Caco-2 (cell line): ENCODE measurements at regions of chr3 and their contacts with region 1.

Region 1: GRCh38 chr3:179653096-179653797 is 407 bp downstream of the USP13 start:
- DNase-seq: peak; percentile 80 to 82
- H3K4me3 ChIP-seq: peak overlapping the region; percentile 99
- H3K4me3 Mint-ChIP-seq: peak overlapping the region; percentile 94
- H3K27ac Mint-ChIP-seq: peak overlapping the region; percentile 81
- H3K4me1 ChIP-seq: no peaks in the 10 kb centered on the region; the same call in 1 of the 2 replicates
- H3K4me1 Mint-ChIP-seq: peaks cover 18% of the 10 kb centered on the region
- H3K27me3 ChIP-seq: no peaks in the 10 kb centered on the region
- H3K27me3 Mint-ChIP-seq: no peaks in the 10 kb centered on the region
- CTCF ChIP-seq: peak in 1 of 2 experiments; percentile 10

Region 2: DNA sequence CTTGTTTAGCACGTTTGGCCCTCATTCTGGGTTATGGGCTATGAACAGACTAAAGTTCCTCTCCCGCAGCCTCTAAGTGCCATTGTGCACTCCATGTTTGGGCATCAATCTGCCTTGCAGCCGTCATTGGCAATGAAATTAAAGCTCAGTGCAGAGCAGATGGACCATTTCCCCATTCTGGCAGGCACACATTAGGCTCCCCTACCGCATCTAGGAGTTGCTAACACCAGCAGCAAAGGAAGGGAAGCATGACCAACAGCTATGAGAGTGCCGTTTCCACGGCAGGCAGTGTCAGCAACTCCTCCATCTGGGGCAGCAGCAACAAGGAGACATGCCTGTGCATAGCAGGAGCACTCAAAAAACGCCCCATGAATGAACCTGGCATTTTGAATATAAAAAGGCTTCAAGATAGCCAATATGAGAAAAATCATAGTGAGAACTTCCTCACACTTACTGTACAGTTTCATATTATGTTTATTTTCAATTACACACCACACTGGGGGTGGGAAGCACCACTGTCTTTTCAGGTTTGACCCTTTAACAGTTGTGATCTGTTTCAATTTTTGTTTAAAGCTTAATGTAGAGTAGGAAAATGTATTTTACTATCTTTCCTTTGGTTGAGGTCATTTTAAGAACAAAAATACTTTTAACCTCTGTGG is 898.3 kb before region 1 on chr3:
- CTCF ChIA-PET with region 1: no interaction called
- POLR2A ChIA-PET with region 1: no interaction called
- intact Hi-C with region 1: no loop called
- DNase-seq: no peak
- H3K4me3 ChIP-seq: no peak overlapping the region
- H3K4me3 Mint-ChIP-seq: no peak overlapping the region
- H3K27ac Mint-ChIP-seq: no peak overlapping the region
- H3K4me1 ChIP-seq: no peaks in the 10 kb centered on the region
- H3K4me1 Mint-ChIP-seq: no peaks in the 10 kb centered on the region
- H3K27me3 ChIP-seq: no peaks in the 10 kb centered on the region
- H3K27me3 Mint-ChIP-seq: no peaks in the 10 kb centered on the region
- CTCF ChIP-seq: no peak

Region 3: GRCh38 chr3:179451265-179452175 is 201.7 kb before region 1 on chr3 and contains the start of gene GNB4:
- CTCF ChIA-PET with region 1: no interaction called
- POLR2A ChIA-PET with region 1: no interaction called
- intact Hi-C with region 1: no loop called
- DNase-seq: peak; percentile 63 to 75
- H3K4me3 ChIP-seq: peak within 1 kb of the TSS; percentile 45
- H3K4me3 Mint-ChIP-seq: peak within 1 kb of the TSS; percentile 79
- H3K27ac Mint-ChIP-seq: peak within 1 kb of the TSS; percentile 71
- H3K4me1 ChIP-seq: no peaks in the 10 kb centered on the region
- H3K4me1 Mint-ChIP-seq: peaks cover 10% of the 10 kb centered on the region
- H3K27me3 ChIP-seq: no peaks in the 10 kb centered on the region; the same call in 1 of the 2 replicates
- H3K27me3 Mint-ChIP-seq: peaks cover 9% of the 10 kb centered on the region
- CTCF ChIP-seq: no peak
- total RNA-seq, gene GNB4: 3.6 and 5.1 TPM in 2 replicates

Region 4: GRCh38 chr3:179541094-179541493 is 112.2 kb before region 1 on chr3:
- CTCF ChIA-PET with region 1: no interaction called
- POLR2A ChIA-PET with region 1: no interaction called
- intact Hi-C with region 1: no loop called
- DNase-seq: no peak
- H3K4me3 ChIP-seq: no peak overlapping the region
- H3K4me3 Mint-ChIP-seq: no peak overlapping the region
- H3K27ac Mint-ChIP-seq: no peak overlapping the region
- H3K4me1 ChIP-seq: peaks cover 5% of the 10 kb centered on the region
- H3K4me1 Mint-ChIP-seq: peaks cover 2% of the 10 kb centered on the region
- H3K27me3 ChIP-seq: no peaks in the 10 kb centered on the region
- H3K27me3 Mint-ChIP-seq: no peaks in the 10 kb centered on the region
- CTCF ChIP-seq: no peak

Region 5: DNA sequence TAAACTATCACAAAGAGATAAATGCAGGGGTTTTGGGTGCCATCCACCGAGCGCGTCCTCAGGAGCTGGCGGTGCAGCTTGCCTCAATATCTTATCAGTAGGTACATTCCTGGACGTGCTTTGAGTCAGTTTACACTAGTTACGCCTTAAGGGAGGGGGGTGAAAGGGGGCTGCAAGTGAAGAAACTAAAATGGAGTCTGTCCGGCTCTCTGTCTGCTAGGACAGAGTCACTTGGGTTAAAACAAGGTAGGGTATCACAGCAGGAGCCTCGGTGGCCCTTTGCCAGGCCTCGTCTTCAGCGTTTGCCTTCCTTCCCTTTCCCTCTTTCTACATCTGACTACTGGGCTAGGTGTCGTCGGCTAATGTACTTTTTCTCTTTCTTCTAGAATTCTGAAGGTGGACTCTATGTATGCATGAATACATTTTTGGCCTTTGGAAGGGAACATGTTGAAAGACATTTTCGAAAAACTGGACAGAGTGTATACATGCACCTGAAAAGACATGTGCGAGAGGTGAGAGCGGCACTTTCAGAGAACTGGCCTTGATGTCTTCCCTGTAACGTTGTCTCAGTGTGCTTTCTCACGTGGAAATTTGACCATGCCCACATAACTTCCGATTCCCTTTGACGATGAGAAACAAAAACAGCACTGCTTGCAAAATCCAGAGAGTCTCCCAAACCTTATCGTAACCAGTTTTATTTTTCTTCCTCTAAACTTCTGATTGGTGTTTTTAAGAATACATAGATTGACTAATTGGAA is 28.4 kb after region 1 on chr3:
- CTCF ChIA-PET with region 1: no interaction called
- POLR2A ChIA-PET with region 1: interaction called, 4 read pairs
- intact Hi-C with region 1: loop called (anchors 1 kb)
- DNase-seq: peak; percentile 46 to 53
- H3K4me3 ChIP-seq: no peak overlapping the region
- H3K4me3 Mint-ChIP-seq: peak overlapping the region; percentile 64
- H3K27ac Mint-ChIP-seq: peak overlapping the region; percentile 97
- H3K4me1 ChIP-seq: peaks cover 29% of the 10 kb centered on the region
- H3K4me1 Mint-ChIP-seq: peaks cover 34% of the 10 kb centered on the region
- H3K27me3 ChIP-seq: no peaks in the 10 kb centered on the region
- H3K27me3 Mint-ChIP-seq: no peaks in the 10 kb centered on the region
- CTCF ChIP-seq: no peak

Region 6: DNA sequence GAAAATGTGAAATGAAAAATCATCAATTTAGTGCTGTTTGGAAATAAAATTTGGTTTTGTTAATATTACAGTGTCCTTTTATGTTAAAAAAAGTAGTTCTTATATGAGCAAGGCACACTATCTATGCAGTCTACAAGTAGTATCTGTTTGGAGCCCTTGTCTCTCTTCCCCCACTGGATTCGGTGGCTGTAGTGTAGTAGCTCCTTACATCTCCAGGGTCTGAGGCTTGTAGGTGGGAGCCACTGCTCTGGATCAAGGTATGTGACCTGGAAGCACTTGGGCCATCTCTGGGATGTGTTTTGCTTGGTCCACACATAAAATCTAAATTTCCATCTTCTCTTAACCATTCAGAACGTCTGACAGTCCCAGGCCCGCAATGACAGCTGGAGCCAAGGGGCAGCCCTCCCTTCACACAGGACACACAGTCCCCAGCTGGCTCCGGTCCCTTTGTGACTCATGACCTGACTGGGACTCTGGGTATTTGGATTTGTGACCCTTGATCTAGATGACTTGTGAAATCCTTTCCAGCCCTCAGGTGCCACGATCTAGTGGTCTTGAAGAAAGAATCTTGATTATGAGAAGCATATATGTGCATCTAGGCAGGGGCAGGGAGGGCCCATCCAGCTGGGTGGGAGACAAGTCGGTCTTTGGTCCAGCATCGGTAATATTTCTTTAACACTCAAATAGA is 79.6 kb after region 1 on chr3:
- CTCF ChIA-PET with region 1: no interaction called
- POLR2A ChIA-PET with region 1: no interaction called
- intact Hi-C with region 1: loop called (anchors 10 kb)
- DNase-seq: no peak
- H3K4me3 ChIP-seq: no peak overlapping the region
- H3K4me3 Mint-ChIP-seq: no peak overlapping the region
- H3K27ac Mint-ChIP-seq: no peak overlapping the region
- H3K4me1 ChIP-seq: peaks cover 33% of the 10 kb centered on the region
- H3K4me1 Mint-ChIP-seq: peaks cover 20% of the 10 kb centered on the region
- H3K27me3 ChIP-seq: no peaks in the 10 kb centered on the region
- H3K27me3 Mint-ChIP-seq: no peaks in the 10 kb centered on the region
- CTCF ChIP-seq: no peak

Region 7: GRCh38 chr3:179956416-179956830 is 303.2 kb after region 1 on chr3:
- CTCF ChIA-PET with region 1: no interaction called
- POLR2A ChIA-PET with region 1: no interaction called
- intact Hi-C with region 1: no loop called
- DNase-seq: no peak
- H3K4me3 ChIP-seq: no peak overlapping the region
- H3K4me3 Mint-ChIP-seq: no peak overlapping the region
- H3K27ac Mint-ChIP-seq: no peak overlapping the region
- H3K4me1 ChIP-seq: no peaks in the 10 kb centered on the region
- H3K4me1 Mint-ChIP-seq: no peaks in the 10 kb centered on the region
- H3K27me3 ChIP-seq: no peaks in the 10 kb centered on the region
- H3K27me3 Mint-ChIP-seq: peaks cover 16% of the 10 kb centered on the region
- CTCF ChIP-seq: no peak